ENCODE measurements at regions of chr12 and their contacts with region 1.

Region 1: DNA sequence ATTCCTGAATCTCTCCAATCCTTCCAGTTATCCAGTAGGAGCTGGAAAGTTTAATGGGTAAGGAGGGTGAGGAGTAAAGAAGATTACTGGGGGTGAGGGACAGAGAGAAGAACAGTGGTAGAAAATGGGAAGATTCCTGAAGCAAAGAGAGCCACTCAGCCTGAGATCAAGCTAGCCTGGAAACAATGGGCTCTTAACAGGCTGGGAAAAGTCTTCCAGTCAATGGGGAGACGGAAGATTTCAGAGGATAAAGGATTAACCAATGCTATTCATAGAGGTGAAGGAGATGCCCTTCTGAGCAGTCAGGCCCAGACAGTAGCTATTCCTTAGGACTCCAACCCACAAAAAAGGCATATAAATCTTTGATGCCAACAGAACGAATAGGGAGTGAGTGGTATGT is 14.8 kb downstream of the GDF11 start:
- DNase-seq: no peak
- H3K4me3 ChIP-seq: no peak overlapping the region
- H3K27ac ChIP-seq: no peak overlapping the region
- H3K4me1 ChIP-seq: no peaks in the 10 kb centered on the region
- H3K27me3 ChIP-seq: no peaks in the 10 kb centered on the region
- CTCF ChIP-seq: no peak
- EP300 ChIP-seq: no peak
- POLR2A ChIP-seq: no peak

Region 2: DNA sequence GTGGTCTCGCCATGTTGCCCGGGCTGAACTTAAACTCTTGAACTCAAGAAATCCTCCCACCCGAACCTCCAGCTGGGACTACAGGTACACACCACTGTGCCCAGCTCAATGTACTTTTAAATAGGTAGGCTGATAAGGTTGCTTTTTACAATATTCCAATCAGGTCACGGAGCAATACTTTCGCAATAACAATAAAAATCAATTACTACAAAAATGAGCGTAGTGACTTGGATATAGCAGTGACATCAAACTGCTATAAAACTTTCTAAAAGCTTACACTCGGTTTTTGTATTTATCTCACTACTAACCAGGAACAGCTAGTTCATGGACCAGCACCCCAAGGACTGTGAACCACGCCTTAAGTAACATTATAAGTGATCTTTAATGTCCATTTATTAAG is 49.3 kb after region 1 on chr12:
- in situ Hi-C with region 1: loop called in 1 of 4 experiments (anchors 10 kb)
- intact Hi-C with region 1: no loop called
- DNase-seq: no peak
- H3K4me3 ChIP-seq: no peak overlapping the region
- H3K27ac ChIP-seq: no peak overlapping the region
- H3K4me1 ChIP-seq: peaks cover 0 to 3% (median under 1%) of the 10 kb centered on the region in 4 donors
- H3K27me3 ChIP-seq: no peaks in the 10 kb centered on the region
- CTCF ChIP-seq: no peak
- EP300 ChIP-seq: no peak
- POLR2A ChIP-seq: no peak

Measured in transverse colon (tissue), 4 donors.